Naive thymus-derived CD4-positive, alpha-beta T cell (primary cell): ENCODE measurements at regions of chr10 and their contacts with region 1.

Region 1: DNA sequence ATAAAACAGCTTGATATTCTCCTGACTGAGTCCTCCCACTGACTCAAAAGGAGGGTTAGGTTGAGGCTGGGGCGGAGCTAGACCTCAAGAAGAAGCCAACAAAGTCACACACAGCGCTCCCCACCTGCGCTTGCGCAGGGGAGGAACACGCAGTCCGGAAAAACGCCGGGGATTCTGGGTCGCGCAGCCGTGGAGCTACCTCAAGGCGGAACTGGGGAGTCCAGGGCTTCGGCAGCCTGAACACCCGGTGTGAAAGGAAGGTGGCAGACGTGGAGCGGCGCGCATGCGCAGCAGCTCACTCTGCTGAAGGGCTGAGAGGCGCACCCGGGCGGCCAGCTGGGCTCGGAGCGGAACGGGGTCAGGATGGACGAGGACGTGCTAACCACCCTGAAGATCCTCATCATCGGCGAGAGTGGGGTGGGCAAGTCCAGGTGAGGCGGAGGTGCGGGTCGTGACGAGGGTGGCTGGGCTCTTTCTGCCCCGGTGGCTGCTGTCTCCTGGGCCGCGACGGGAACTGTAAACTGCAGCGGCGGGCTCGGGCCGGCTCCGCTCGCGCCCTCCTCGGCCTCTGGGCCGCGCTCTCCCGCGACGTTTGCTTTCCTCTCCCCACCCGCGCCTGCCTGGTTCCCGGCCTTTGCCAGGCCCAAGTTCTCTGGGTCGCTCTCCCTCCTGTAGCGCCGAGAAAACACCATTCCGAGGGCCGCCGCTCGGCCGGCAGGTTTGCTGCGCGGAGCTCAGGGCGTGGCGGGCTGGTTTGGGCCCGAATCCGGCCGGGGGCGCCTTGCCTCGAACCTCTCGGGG is at the start of gene RAB18:
- DNase-seq: peak; percentile 93 to 99 (median 98)
- ATAC-seq: peak; percentile 97
- H3K4me3 ChIP-seq: peak within 1 kb of the TSS; percentile 82
- H3K4me3 Mint-ChIP-seq: peak within 1 kb of the TSS; percentile 95 to 100 (median 99)
- H3K27ac ChIP-seq: peak within 1 kb of the TSS; percentile 87
- H3K27ac Mint-ChIP-seq: peak within 1 kb of the TSS; percentile 96 to 99 (median 98)
- H3K4me1 ChIP-seq: peaks cover 13 to 18% of the 10 kb centered on the region in 2 donors
- H3K4me1 Mint-ChIP-seq: peaks cover 39 to 59% (median 55%) of the 10 kb centered on the region in 7 donors
- H3K27me3 ChIP-seq: no peaks in the 10 kb centered on the region
- H3K27me3 Mint-ChIP-seq: peaks cover 0 to 7% (median 0%) of the 10 kb centered on the region in 5 donors
- total RNA-seq, gene RAB18: 69.1 to 96.1 (median 73.6) TPM

Region 2: GRCh38 chr10:25615926-25616325 is 1888.3 kb before region 1 on chr10:
- CTCF ChIA-PET with region 1: no interaction called
- POLR2A ChIA-PET with region 1: no interaction called
- intact Hi-C with region 1: no loop called
- DNase-seq: no peak
- ATAC-seq: no peak
- H3K4me3 ChIP-seq: no peak overlapping the region
- H3K4me3 Mint-ChIP-seq: no peak overlapping the region
- H3K27ac ChIP-seq: no peak overlapping the region
- H3K27ac Mint-ChIP-seq: no peak overlapping the region
- H3K4me1 ChIP-seq: no peaks in the 10 kb centered on the region
- H3K4me1 Mint-ChIP-seq: no peaks in the 10 kb centered on the region
- H3K27me3 ChIP-seq: no peaks in the 10 kb centered on the region
- H3K27me3 Mint-ChIP-seq: no peaks in the 10 kb centered on the region

Region 3: GRCh38 chr10:26486991-26487850 is 1017.0 kb before region 1 on chr10:
- CTCF ChIA-PET with region 1: no interaction called
- POLR2A ChIA-PET with region 1: no interaction called
- intact Hi-C with region 1: loop called in 1 of 2 experiments (anchors 10 kb)
- DNase-seq: peak in 8 of 9 donors; percentile 50 to 86 (median 66)
- ATAC-seq: peak; percentile 85
- H3K4me3 ChIP-seq: peak overlapping the region; percentile 43
- H3K4me3 Mint-ChIP-seq: peak overlapping the region; percentile 8 to 83 (median 74)
- H3K27ac ChIP-seq: peak overlapping the region; percentile 84
- H3K27ac Mint-ChIP-seq: peak overlapping the region; percentile 90 to 97 (median 94)
- H3K4me1 ChIP-seq: peaks cover 56 to 64% of the 10 kb centered on the region in 2 donors
- H3K4me1 Mint-ChIP-seq: peaks cover 57 to 82% (median 74%) of the 10 kb centered on the region in 7 donors
- H3K27me3 ChIP-seq: no peaks in the 10 kb centered on the region
- H3K27me3 Mint-ChIP-seq: no peaks in the 10 kb centered on the region

Region 4: DNA sequence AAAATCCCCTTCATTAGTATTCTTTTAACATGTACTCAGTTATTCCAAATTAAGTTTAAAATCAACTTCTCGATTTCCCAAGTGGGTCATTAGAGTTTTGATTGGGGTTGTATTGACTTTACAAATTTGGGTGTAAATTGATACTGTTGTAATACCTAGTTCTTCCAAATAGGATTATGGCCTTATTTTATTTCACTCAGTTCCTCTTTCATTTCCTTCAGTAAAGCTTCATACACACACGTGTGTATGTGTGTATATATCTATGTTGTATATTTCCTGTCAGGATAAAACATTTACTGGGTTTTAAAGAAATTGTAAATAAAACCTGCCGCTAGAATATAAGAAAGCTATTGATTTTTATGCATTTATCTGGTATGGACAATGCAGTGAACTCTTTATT is 365.9 kb before region 1 on chr10:
- CTCF ChIA-PET with region 1: no interaction called
- POLR2A ChIA-PET with region 1: no interaction called
- intact Hi-C with region 1: no loop called
- DNase-seq: no peak
- ATAC-seq: no peak
- H3K4me3 ChIP-seq: no peak overlapping the region
- H3K4me3 Mint-ChIP-seq: no peak overlapping the region
- H3K27ac ChIP-seq: no peak overlapping the region
- H3K27ac Mint-ChIP-seq: peak overlapping the region in 3 of 9 donors; percentile 14 to 16 (median 15)
- H3K4me1 ChIP-seq: no peaks in the 10 kb centered on the region
- H3K4me1 Mint-ChIP-seq: peaks cover 0 to 12% (median 4%) of the 10 kb centered on the region in 7 donors
- H3K27me3 ChIP-seq: no peaks in the 10 kb centered on the region
- H3K27me3 Mint-ChIP-seq: no peaks in the 10 kb centered on the region

Region 5: DNA sequence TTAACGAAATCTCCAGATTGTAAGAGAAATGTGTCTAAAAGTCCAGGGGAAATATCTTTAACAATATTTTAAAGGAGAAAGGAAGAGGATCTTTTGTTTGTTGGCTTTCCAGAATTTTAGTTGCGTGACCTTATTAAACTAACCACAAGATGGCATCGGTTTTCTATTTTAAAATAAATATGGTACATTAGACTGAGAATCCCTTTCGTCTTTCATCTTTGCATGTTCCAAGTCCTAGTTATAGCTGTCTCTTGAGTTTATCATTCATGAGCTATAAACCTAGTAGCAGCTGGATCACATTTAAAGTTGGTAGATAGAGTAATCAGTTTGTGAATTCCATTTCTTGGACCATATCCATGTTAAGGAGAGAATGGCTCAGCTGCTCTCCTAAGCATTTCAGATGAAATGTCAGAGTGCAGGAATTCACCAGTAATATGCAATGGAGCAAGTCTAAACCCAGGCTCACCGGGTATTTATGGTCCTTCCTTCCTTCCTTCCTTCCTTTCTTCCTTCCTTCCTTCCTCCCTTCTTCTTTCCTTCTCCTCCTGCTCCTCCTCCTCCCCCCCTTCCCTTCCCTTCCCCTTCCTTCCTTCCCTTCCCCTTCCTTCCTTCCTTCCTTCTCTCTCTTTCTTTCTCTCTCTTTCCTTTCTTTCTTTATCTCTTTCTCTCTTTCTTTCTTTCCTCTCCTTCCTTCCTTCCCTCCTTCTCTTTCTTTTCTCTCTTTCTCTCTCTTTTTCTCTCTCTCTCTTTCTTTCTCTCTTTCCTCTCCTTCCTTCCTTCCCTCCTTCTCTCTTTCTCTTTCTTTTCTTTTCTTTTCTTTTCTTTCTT is 57.9 kb before region 1 on chr10:
- CTCF ChIA-PET with region 1: interaction called, 5 read pairs
- POLR2A ChIA-PET with region 1: interaction called, 8 read pairs
- intact Hi-C with region 1: loop called (anchors 1 to 5 kb)
- DNase-seq: peak in 6 of 9 donors; percentile 23 to 58 (median 46)
- ATAC-seq: peak; percentile 65
- H3K4me3 ChIP-seq: no peak overlapping the region
- H3K4me3 Mint-ChIP-seq: peak overlapping the region in 3 of 10 donors; percentile 20 to 53 (median 23)
- H3K27ac ChIP-seq: no peak overlapping the region
- H3K27ac Mint-ChIP-seq: peak overlapping the region in 1 of 9 donors; percentile 32
- H3K4me1 ChIP-seq: no peaks in the 10 kb centered on the region
- H3K4me1 Mint-ChIP-seq: peaks cover 6 to 19% (median 17%) of the 10 kb centered on the region in 7 donors
- H3K27me3 ChIP-seq: no peaks in the 10 kb centered on the region
- H3K27me3 Mint-ChIP-seq: peaks cover 0 to 16% (median 0%) of the 10 kb centered on the region in 5 donors

Region 6: DNA sequence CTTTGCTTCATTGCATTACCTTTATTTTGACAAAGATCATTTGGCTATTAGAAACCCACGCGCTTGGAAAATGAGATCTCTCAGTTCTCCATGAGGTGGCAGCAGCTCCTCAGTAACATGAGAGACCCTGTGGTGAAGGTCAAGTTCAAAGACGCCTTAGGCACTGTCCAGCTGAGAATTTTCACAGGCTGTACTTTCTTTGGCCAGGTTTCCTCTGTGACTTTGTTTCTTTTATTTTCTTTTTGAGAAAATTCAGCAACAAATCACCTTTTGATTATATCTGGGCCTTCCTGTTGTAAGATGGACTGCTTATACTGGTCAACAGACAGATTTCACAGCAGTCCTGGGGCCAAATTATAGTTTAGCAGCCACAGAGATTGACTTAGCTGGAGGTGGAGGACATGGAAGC is 54.4 kb after region 1 on chr10:
- CTCF ChIA-PET with region 1: no interaction called
- POLR2A ChIA-PET with region 1: no interaction called
- intact Hi-C with region 1: loop called in 1 of 2 experiments (anchors 5 kb)
- DNase-seq: peak in 3 of 9 donors; percentile 10 to 25 (median 15)
- ATAC-seq: peak; percentile 63
- H3K4me3 ChIP-seq: no peak overlapping the region
- H3K4me3 Mint-ChIP-seq: no peak overlapping the region
- H3K27ac ChIP-seq: no peak overlapping the region
- H3K27ac Mint-ChIP-seq: peak overlapping the region in 1 of 9 donors; percentile 36
- H3K4me1 ChIP-seq: peaks cover 0 to under 1% of the 10 kb centered on the region in 2 donors
- H3K4me1 Mint-ChIP-seq: peaks cover 0 to 4% (median 0%) of the 10 kb centered on the region in 7 donors
- H3K27me3 ChIP-seq: no peaks in the 10 kb centered on the region
- H3K27me3 Mint-ChIP-seq: peaks cover 0 to 16% (median 0%) of the 10 kb centered on the region in 5 donors

Region 7: GRCh38 chr10:27569946-27570345 is 65.7 kb after region 1 on chr10:
- CTCF ChIA-PET with region 1: no interaction called
- POLR2A ChIA-PET with region 1: no interaction called
- intact Hi-C with region 1: no loop called
- DNase-seq: no peak
- ATAC-seq: no peak
- H3K4me3 ChIP-seq: no peak overlapping the region
- H3K4me3 Mint-ChIP-seq: no peak overlapping the region
- H3K27ac ChIP-seq: no peak overlapping the region
- H3K27ac Mint-ChIP-seq: peak overlapping the region in 1 of 9 donors; percentile 3
- H3K4me1 ChIP-seq: peaks cover 0 to 19% of the 10 kb centered on the region in 2 donors
- H3K4me1 Mint-ChIP-seq: peaks cover 4 to 28% (median 15%) of the 10 kb centered on the region in 7 donors
- H3K27me3 ChIP-seq: no peaks in the 10 kb centered on the region
- H3K27me3 Mint-ChIP-seq: peaks cover 0 to 2% (median 0%) of the 10 kb centered on the region in 5 donors

Region 8: DNA sequence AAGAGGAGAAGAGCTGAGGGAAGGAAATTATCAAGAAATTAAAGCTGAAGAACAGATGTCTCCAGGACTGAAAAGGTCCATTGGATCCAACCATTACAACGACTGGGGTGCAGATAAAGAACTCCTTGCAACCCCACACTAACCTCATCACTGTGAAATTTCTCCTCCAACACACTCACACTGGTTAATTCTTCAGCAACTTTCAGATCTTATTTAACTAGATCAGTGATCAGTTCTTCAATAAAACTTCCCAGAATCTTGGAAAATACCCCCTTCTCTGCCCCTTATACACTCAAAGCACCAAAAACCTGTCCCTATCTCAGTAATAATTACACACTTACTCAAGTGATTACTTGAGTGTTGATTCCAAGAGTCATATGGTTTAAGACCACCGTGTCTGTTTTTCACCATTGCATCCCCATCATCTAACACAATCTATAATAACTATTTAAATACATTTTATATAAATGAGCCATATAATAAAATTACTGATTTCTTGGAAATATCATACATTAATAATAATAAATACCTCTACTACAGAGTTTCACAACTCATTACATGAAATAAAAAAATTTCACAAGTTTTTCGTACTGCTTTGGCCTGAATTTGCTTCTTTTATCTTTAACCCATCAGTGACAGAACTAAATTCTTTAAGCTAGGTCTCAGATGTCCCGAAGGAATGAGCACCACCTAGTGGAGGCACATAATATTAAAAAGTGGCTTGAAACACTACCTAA is 675.0 kb after region 1 on chr10:
- CTCF ChIA-PET with region 1: no interaction called
- POLR2A ChIA-PET with region 1: no interaction called
- intact Hi-C with region 1: loop called (anchors 1 to 5 kb)
- DNase-seq: peak in 7 of 9 donors; percentile 18 to 63 (median 49)
- ATAC-seq: peak; percentile 86
- H3K4me3 ChIP-seq: peak overlapping the region; percentile 55
- H3K4me3 Mint-ChIP-seq: peak overlapping the region; percentile 0 to 98 (median 87)
- H3K27ac ChIP-seq: peak overlapping the region; percentile 54
- H3K27ac Mint-ChIP-seq: peak overlapping the region; percentile 77 to 98 (median 92)
- H3K4me1 ChIP-seq: peaks cover 10 to 12% of the 10 kb centered on the region in 2 donors
- H3K4me1 Mint-ChIP-seq: peaks cover 17 to 70% (median 55%) of the 10 kb centered on the region in 7 donors
- H3K27me3 ChIP-seq: no peaks in the 10 kb centered on the region
- H3K27me3 Mint-ChIP-seq: peaks cover 0 to 9% (median 0%) of the 10 kb centered on the region in 5 donors

Region 9: DNA sequence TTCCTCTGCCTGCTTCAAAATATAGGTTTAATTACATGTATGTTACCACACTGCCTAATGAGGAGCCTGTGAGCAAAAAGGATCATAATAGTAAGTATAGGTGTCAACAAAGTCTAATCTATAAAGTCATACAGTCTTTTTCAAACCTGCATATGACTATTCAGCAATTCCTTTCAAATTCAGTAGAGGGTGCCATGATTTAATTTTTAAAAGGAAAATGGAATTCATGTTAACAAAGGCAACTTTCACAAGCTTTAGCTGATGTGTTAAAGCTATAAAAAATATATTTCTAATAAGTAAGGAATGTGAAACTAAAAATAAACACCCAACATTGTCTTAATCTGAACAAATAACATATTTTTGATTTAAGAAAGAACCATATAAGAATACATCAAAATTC is 746.6 kb after region 1 on chr10:
- CTCF ChIA-PET with region 1: no interaction called
- POLR2A ChIA-PET with region 1: no interaction called
- intact Hi-C with region 1: no loop called
- DNase-seq: peak in 5 of 9 donors; percentile 24 to 47 (median 43)
- ATAC-seq: peak; percentile 57
- H3K4me3 ChIP-seq: no peak overlapping the region
- H3K4me3 Mint-ChIP-seq: no peak overlapping the region
- H3K27ac ChIP-seq: no peak overlapping the region
- H3K27ac Mint-ChIP-seq: peak overlapping the region in 5 of 9 donors; percentile 3 to 80 (median 29)
- H3K4me1 ChIP-seq: no peaks in the 10 kb centered on the region
- H3K4me1 Mint-ChIP-seq: peaks cover 10 to 72% (median 50%) of the 10 kb centered on the region in 7 donors
- H3K27me3 ChIP-seq: no peaks in the 10 kb centered on the region
- H3K27me3 Mint-ChIP-seq: peaks cover 0 to 8% (median 0%) of the 10 kb centered on the region in 5 donors

Region 10: GRCh38 chr10:28367929-28368484 is 863.8 kb after region 1 on chr10:
- CTCF ChIA-PET with region 1: no interaction called
- POLR2A ChIA-PET with region 1: no interaction called
- intact Hi-C with region 1: loop called in 1 of 2 experiments (anchors 1 kb)
- DNase-seq: peak in 8 of 9 donors; percentile 54 to 88 (median 83)
- ATAC-seq: peak; percentile 97
- H3K4me3 ChIP-seq: peak overlapping the region; percentile 18
- H3K4me3 Mint-ChIP-seq: peak overlapping the region; percentile 63 to 93 (median 76)
- H3K27ac ChIP-seq: peak overlapping the region; percentile 78
- H3K27ac Mint-ChIP-seq: peak overlapping the region; percentile 90 to 99 (median 96)
- H3K4me1 ChIP-seq: peaks cover 44 to 54% of the 10 kb centered on the region in 2 donors
- H3K4me1 Mint-ChIP-seq: peaks cover 39 to 80% (median 60%) of the 10 kb centered on the region in 7 donors
- H3K27me3 ChIP-seq: no peaks in the 10 kb centered on the region
- H3K27me3 Mint-ChIP-seq: peaks cover 0 to 5% (median 0%) of the 10 kb centered on the region in 5 donors